WTC11 (cell line): ENCODE measurements at regions of chr11 and their contacts with region 1.

Region 1: GRCh38 chr11:67658691-67659271 is 8.3 kb upstream of the ACY3 start:
- DNase-seq: no peak
- ATAC-seq: no peak
- H3K4me3 Mint-ChIP-seq: no peak overlapping the region
- H3K27ac Mint-ChIP-seq: no peak overlapping the region
- H3K4me1 Mint-ChIP-seq: no peaks in the 10 kb centered on the region
- H3K27me3 Mint-ChIP-seq: no peaks in the 10 kb centered on the region; the same call in 1 of the 2 replicates
- CTCF ChIP-seq: no peak

Region 2: GRCh38 chr11:67563354-67564114 is 95.2 kb before region 1 on chr11:
- CTCF ChIA-PET with region 1: no interaction called
- POLR2A ChIA-PET with region 1: no interaction called
- DNase-seq: no peak
- ATAC-seq: no peak
- H3K4me3 Mint-ChIP-seq: no peak overlapping the region
- H3K27ac Mint-ChIP-seq: no peak overlapping the region
- H3K4me1 Mint-ChIP-seq: peaks cover 17% of the 10 kb centered on the region
- H3K27me3 Mint-ChIP-seq: peaks cover 5% of the 10 kb centered on the region
- CTCF ChIP-seq: no peak

Region 3: DNA sequence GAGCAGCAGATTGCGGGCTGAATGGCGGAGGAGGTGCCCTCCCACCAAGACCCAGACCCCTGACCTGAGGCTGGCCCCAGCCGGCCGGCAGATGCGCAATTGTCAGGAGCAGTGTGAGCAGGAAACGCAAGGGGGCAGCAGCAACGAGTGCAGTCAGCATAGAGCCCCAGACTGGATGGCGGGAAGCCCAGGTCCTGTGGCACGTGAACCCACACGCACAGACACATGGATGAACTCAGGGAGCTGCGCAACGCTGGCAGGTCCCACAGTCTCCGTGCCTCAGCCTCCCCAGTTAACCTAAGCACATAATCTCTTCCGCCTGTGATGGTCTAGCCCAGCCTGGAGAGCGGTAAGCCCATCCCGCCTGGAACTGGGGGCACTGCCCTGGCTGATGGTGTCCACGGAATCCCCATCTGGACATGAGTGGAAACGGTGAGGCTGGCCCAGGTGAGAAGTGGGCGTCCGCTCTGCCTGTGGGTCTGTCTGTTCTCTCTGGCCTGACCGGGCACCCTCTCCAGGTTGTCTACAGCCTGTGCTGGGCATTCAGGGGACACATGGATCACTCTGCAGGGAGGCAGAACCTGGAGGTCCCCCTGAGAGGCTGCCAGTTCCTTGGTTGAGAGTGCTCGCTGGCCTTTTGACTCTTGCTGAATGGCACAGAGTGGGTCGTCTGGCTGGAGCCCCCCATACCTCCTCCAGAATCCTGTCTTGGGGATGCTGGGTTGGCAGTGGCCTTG is 18.6 kb before region 1 on chr11:
- CTCF ChIA-PET with region 1: interaction called, 11 read pairs
- POLR2A ChIA-PET with region 1: no interaction called
- DNase-seq: peak; percentile 89
- ATAC-seq: peak; percentile 91
- H3K4me3 Mint-ChIP-seq: no peak overlapping the region
- H3K27ac Mint-ChIP-seq: no peak overlapping the region
- H3K4me1 Mint-ChIP-seq: peaks cover 2% of the 10 kb centered on the region
- H3K27me3 Mint-ChIP-seq: peaks cover 30% of the 10 kb centered on the region
- CTCF ChIP-seq: peak; percentile 52

Region 4: GRCh38 chr11:67648140-67649123 is 10.3 kb before region 1 on chr11:
- CTCF ChIA-PET with region 1: interaction called, 27 read pairs
- POLR2A ChIA-PET with region 1: no interaction called
- DNase-seq: peak; percentile 71
- ATAC-seq: peak; percentile 89
- H3K4me3 Mint-ChIP-seq: no peak overlapping the region
- H3K27ac Mint-ChIP-seq: no peak overlapping the region
- H3K4me1 Mint-ChIP-seq: peaks cover 6% of the 10 kb centered on the region
- H3K27me3 Mint-ChIP-seq: no peaks in the 10 kb centered on the region; the same call in 1 of the 2 replicates
- CTCF ChIP-seq: no peak

Region 5: GRCh38 chr11:67674442-67674901 is 15.7 kb after region 1 on chr11 and contains the start of gene ALDH3B2:
- CTCF ChIA-PET with region 1: interaction called, 10 read pairs
- POLR2A ChIA-PET with region 1: interaction called, 3 read pairs
- DNase-seq: no peak
- ATAC-seq: peak; percentile 91
- H3K4me3 Mint-ChIP-seq: no peak within 1 kb of the TSS
- H3K27ac Mint-ChIP-seq: peak within 1 kb of the TSS; percentile 63; the same call in 1 of the 2 replicates
- H3K4me1 Mint-ChIP-seq: peaks cover 20% of the 10 kb centered on the region
- H3K27me3 Mint-ChIP-seq: no peaks in the 10 kb centered on the region; the same call in 1 of the 2 replicates
- CTCF ChIP-seq: no peak
- total RNA-seq, gene ALDH3B2: 0.13 to 0.30 TPM (median 0.30 TPM) in 3 replicates